Activated CD4-positive, alpha-beta memory T cell treated with anti-CD3 and anti-CD28 coated beads for 36 hours (primary cell): ENCODE measurements at regions of chr4 and their contacts with region 1.

Region 1: DNA sequence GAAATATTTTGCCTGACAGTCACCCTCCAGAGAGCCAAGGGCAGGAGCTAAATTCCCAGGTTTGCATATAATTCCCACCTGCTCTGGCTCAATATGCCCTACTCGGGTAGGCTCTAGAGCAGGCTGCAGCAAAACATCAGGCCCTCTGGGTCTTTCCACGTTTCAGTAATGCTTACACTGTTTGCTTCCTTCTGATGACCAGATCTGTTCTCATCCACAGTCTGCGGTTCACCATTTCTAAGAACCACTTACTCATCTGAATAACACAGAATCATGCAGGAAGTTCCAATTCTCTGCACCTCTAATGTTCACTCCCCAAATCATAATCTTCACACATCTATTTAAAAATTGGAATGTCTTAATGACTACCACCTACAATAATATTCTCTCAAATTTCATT is 141.4 kb downstream of the PPP3CA start:
- DNase-seq: peak; percentile 60
- H3K4me3 Mint-ChIP-seq: no peak overlapping the region
- H3K27ac Mint-ChIP-seq: peak overlapping the region; percentile 15
- H3K4me1 Mint-ChIP-seq: peaks cover 22% of the 10 kb centered on the region
- H3K27me3 Mint-ChIP-seq: no peaks in the 10 kb centered on the region

Region 2: DNA sequence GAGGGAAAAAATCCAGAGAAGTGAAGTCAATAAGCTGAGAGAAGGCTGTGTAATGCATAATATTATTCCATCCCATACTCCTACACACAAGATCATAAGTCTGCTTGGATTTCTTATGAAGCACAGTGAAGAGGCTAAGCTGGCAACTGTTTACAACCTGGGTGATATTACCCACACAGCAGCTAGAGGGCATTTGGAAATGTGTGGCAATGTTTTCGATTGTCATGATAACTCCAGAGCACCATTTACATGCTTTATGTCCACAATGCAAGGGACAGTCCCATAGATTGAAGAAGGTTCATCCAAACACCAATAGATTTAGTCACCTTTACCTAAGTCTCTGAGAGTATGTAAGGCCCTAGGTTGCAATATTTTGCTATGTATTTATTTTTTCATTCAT is 270.8 kb before region 1 on chr4:
- CTCF ChIA-PET with region 1: no interaction called
- POLR2A ChIA-PET with region 1: no interaction called
- intact Hi-C with region 1: no loop called
- DNase-seq: no peak
- H3K4me3 Mint-ChIP-seq: no peak overlapping the region
- H3K27ac Mint-ChIP-seq: no peak overlapping the region
- H3K4me1 Mint-ChIP-seq: peaks cover 11% of the 10 kb centered on the region
- H3K27me3 Mint-ChIP-seq: no peaks in the 10 kb centered on the region

Region 3: DNA sequence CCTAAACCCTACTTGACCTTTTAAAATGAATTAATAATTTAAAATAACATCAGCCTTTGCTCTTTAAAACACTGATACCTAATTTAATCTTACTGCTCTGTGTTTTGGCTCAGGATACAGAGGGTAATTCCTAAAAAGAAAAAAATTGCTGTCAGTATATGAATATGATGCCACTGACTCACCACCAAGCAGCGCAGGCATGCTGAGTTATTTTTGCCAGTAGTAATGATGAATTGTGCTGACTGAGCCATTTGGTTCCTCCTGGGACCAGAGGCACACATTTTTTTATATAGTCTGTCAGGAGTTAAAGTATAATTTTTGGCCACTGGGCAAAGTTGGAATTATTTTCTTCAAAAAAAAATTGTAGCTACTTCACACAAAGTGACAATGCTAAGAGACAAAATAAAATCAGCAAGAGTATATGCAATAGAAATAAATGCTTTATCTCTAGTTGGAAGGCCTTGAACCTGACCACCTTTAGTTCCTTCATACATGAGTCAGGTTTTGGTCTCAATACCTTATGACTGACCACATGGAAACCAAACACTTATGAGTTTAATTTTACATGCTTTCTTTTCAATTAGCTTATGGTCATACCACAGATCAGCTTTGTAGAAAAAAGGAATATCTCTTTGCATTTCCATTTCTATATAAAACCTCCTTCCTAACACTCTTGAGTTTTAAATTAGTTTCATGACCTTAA is 26.3 kb after region 1 on chr4:
- CTCF ChIA-PET with region 1: no interaction called
- POLR2A ChIA-PET with region 1: no interaction called
- intact Hi-C with region 1: loop called (anchors 1 kb)
- DNase-seq: peak; percentile 65
- H3K4me3 Mint-ChIP-seq: no peak overlapping the region
- H3K27ac Mint-ChIP-seq: no peak overlapping the region
- H3K4me1 Mint-ChIP-seq: peaks cover 29% of the 10 kb centered on the region
- H3K27me3 Mint-ChIP-seq: no peaks in the 10 kb centered on the region

Region 4: DNA sequence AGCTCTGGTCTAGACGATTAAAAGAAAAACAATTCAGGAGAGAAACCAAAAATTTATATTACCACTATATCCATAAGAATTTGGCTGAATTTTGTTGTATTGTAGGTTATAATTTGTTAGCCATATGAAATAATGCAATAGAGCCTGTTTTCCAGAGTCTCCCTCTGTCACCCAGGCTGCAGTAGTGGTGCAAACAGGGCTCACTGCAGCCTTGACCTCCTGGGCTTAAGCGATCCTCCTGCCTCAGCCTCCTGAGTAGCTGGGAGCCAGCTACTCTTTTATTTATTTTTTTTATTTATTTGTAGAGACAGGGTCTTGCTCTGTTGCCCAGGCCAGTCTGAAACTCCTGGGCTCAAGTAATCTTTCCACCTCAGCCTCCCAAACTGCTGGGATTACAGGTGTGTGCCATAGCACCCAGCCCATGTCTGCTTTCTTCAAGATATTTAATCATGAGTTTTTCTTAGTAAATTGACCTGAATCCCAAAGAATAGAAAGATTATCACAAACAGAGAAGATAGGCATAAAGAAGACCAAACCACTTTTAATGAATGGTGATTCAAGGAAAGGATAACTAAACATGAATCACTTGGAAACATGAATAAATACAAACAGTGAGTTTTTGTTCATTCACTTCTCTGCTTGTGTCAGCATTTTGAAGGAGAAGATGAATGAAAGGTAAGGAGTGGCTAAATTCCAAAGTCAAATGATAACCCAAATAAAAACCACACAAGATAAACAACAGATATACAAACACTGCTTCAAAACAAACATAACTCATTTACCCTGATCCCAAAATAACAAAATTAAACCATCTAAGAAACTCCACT is 59.3 kb after region 1 on chr4:
- CTCF ChIA-PET with region 1: no interaction called
- POLR2A ChIA-PET with region 1: no interaction called
- intact Hi-C with region 1: loop called (anchors 2 kb)
- DNase-seq: no peak
- H3K4me3 Mint-ChIP-seq: no peak overlapping the region
- H3K27ac Mint-ChIP-seq: no peak overlapping the region
- H3K4me1 Mint-ChIP-seq: peaks cover 30% of the 10 kb centered on the region
- H3K27me3 Mint-ChIP-seq: no peaks in the 10 kb centered on the region